Ascending aorta (tissue), 2 donors: ENCODE measurements at regions of chr11 and their contacts with region 1.

Region 1: GRCh38 chr11:727859-728748 is 19.2 kb upstream of the TALDO1 start:
- DNase-seq: peak; percentile 83 to 98
- H3K4me3 ChIP-seq: peak overlapping the region in 1 of 2 donors; percentile 3
- H3K27ac ChIP-seq: peak overlapping the region; percentile 93 to 95
- H3K4me1 ChIP-seq: peaks cover 17 to 34% of the 10 kb centered on the region in 2 donors
- H3K27me3 ChIP-seq: no peaks in the 10 kb centered on the region
- CTCF ChIP-seq: peak; percentile 98 to 99 (median 99)

Region 2: DNA sequence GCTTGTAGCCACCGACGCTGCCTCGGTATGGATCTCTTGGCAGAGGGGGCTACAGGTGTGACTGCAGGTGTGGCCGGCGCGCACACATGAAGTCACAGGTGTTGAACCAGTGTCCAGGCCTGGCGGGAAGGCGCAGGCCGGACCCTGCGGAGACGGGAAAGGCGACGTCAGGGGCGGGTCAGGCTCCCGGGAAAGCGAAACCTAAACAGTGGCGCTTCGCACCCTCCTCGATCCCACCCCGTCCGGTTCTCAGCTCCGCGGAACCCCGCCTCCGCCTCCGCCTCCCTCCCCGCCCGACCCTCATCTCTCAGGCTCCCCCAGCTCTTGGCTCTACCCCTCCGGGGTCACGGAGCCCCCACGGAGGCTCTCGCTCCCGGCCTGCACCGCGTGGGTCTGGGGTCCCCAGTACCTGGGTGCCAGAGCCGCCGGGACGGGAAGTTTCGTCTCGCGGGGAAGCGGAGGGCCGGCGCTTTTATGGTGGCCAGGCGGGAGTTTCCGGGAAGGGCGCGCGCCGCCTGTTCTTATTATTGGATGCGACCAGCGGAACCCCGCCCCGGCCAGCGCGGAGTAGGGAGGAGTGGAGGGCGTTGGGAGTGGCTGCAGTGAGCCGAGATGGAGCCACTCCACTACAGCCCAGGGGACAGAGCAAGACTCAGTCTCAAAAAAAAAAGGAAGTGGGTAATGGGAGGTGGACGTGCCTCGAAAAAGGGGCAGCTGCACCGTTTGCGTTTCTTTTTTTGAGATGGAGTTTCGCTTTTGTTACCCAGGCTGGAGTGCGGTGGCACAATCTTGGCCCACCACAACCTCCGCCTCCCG is 112.4 kb before region 1 on chr11 and contains the start of gene IRF7:
- intact Hi-C with region 1: loop called (anchors 5 kb)
- DNase-seq: peak; percentile 85 to 98
- H3K4me3 ChIP-seq: peak within 1 kb of the TSS; percentile 69 to 81
- H3K27ac ChIP-seq: peak within 1 kb of the TSS; percentile 90 to 94
- H3K4me1 ChIP-seq: peaks cover 11 to 14% of the 10 kb centered on the region in 2 donors
- H3K27me3 ChIP-seq: no peaks in the 10 kb centered on the region
- CTCF ChIP-seq: no peak
- total RNA-seq, gene IRF7: 44.6 TPM

Region 3: DNA sequence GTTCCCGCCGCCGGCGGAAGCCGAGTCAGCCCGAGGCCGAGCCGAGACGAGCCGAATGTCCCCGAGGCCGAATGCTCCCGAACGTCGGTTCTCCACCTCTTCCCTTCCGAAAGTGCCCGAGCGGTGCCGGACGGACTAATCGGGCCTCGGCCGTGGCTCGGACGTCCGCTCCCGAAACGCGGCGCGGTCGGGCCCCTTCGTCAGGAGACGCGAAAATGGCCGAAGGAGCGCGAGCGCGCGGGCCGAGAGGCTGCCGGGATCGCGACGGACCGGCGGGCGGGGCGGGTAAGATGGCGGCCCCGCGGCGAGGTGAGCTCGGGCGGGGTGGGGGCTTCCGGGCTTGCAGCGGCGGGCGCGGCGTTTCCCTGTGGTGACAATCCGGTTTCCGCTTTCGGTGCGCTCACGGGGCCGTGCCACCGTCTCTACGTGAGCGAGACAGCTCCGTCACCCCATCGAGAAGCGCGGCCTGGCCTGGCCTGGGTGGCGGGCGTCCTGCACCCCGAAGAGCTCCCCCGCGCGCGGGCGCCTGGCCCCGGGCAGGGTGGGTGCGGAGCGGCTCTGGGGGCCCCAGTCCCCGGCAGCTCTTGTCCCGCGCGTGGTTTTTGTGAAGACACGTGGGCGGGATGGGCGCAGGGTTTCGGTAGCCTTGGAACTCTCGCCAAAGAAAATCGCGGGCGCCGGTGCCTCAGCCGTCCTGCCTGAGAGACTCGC is 32.4 kb before region 1 on chr11 and contains the start of gene TMEM80:
- intact Hi-C with region 1: loop called (anchors 1 kb)
- DNase-seq: peak; percentile 93 to 99
- H3K4me3 ChIP-seq: peak within 1 kb of the TSS; percentile 93 to 97
- H3K27ac ChIP-seq: peak within 1 kb of the TSS; percentile 100
- H3K4me1 ChIP-seq: peaks cover 14 to 38% of the 10 kb centered on the region in 2 donors
- H3K27me3 ChIP-seq: no peaks in the 10 kb centered on the region
- CTCF ChIP-seq: no peak
- total RNA-seq, gene TMEM80: 1.3 TPM

Region 4: GRCh38 chr11:747158-748006 is 19.3 kb after region 1 on chr11 and contains the start of gene TALDO1:
- intact Hi-C with region 1: loop called (anchors 1 kb)
- DNase-seq: peak; percentile 50 to 94
- H3K4me3 ChIP-seq: peak within 1 kb of the TSS; percentile 98 to 99
- H3K27ac ChIP-seq: peak within 1 kb of the TSS; percentile 94 to 97
- H3K4me1 ChIP-seq: peaks cover 0 to 18% of the 10 kb centered on the region in 2 donors
- H3K27me3 ChIP-seq: no peaks in the 10 kb centered on the region
- CTCF ChIP-seq: peak in 2 of 3 experiments; percentile 16 to 34
- total RNA-seq, gene TALDO1: 245 TPM